CD14-positive monocyte (primary cell): ENCODE measurements at regions of chr2 and their contacts with region 1.

Region 1: GRCh38 chr2:10072656-10073480 is 7.3 kb downstream of the CYS1 start:
- DNase-seq: peak; percentile 74 to 79 (median 79)
- H3K4me3 ChIP-seq: no peak overlapping the region
- H3K4me3 Mint-ChIP-seq: peak overlapping the region in 1 of 2 donors; percentile 24
- H3K27ac ChIP-seq: no peak overlapping the region
- H3K27ac Mint-ChIP-seq: no peak overlapping the region
- H3K4me1 ChIP-seq: no peaks in the 10 kb centered on the region
- H3K4me1 Mint-ChIP-seq: peaks cover 3% of the 10 kb centered on the region
- H3K27me3 ChIP-seq: peaks cover 28 to 52% of the 10 kb centered on the region in 2 donors
- H3K27me3 Mint-ChIP-seq: peaks cover 49 to 62% (median 59%) of the 10 kb centered on the region in 3 donors
- CTCF ChIP-seq: peak; percentile 79

Region 2: DNA sequence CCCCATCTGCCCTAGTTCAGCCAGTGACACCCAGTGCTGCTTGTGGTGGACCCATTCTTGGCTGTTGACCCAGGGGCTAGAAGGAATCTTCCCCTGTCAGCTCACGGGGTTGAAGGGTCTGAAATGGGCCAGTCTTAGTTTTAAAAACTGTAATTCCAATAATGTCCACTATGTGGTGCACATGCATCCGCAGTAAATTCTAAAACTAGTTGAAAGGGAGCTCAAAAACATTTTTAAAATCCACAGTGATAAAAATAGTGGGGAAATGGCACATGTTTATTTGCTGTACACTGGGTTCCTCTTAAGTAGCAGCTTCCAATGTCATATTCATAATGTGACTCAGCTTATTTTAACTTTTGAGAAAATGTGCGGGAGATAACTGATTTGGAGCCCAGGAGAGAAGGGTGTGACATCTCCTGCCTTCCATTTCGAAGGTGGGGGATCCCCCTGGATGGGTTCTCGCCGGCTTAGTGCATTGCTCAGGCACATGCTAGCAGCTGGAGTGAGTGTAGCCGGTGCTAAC is 88.6 kb before region 1 on chr2:
- intact Hi-C with region 1: no loop called
- DNase-seq: peak; percentile 52 to 74 (median 61)
- H3K4me3 ChIP-seq: no peak overlapping the region
- H3K4me3 Mint-ChIP-seq: peak overlapping the region; percentile 45 to 70
- H3K27ac ChIP-seq: no peak overlapping the region
- H3K27ac Mint-ChIP-seq: peak overlapping the region in 3 of 7 donors; percentile 32 to 73 (median 65)
- H3K4me1 ChIP-seq: peaks cover 3 to 8% of the 10 kb centered on the region in 2 donors
- H3K4me1 Mint-ChIP-seq: peaks cover 7% of the 10 kb centered on the region
- H3K27me3 ChIP-seq: no peaks in the 10 kb centered on the region
- H3K27me3 Mint-ChIP-seq: peaks cover 10 to 17% (median 13%) of the 10 kb centered on the region in 3 donors
- CTCF ChIP-seq: peak; percentile 79

Region 3: DNA sequence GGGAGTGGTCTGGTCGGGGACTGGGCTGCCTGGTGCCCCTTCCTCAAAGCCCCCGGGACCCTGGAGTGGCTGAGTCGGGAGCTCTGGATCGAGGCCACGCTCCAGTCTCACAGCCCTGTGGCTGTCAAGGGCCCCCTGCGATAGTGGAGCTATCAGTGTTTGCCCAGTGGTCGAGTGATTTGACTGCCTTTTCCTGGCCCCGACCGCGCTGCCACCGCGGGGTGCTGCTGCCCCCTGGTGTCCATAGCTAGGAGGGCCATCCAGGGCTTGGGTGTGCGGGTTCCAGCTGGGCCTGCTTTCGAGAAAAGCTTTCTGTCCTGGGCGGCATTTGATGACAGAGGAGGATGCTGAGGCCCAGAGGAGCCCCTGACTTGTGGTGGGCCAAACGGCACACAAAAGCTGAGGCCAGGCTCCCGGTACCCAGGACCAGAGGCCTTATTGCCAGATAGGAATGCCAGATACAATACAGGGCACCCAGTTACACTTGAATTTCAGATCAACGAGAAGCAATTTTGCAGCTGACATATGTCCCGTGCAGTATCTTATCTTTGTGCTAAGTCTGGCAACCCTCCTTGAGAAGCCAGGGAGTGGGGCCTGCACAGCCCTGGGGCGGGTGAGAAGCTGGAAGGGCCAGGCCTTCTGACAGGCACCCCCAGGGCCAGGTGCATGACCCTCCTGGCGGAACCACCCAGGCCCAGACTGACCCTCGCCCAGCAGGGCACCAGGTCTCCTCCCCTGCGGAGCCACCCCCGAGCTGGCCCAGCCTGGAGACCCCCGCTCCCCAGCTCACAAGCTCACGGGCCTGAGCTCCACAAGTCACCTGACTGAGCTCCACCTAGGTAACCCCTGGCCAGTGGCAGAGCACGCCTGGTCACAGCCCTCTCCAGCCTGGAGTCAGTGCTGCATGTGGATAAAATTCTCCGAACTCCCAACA is 362.3 kb after region 1 on chr2:
- intact Hi-C with region 1: loop called (anchors 1 to 2 kb)
- DNase-seq: peak; percentile 68 to 73 (median 69)
- H3K4me3 ChIP-seq: no peak overlapping the region
- H3K4me3 Mint-ChIP-seq: no peak overlapping the region
- H3K27ac ChIP-seq: no peak overlapping the region
- H3K27ac Mint-ChIP-seq: no peak overlapping the region
- H3K4me1 ChIP-seq: peaks cover 12 to 17% of the 10 kb centered on the region in 2 donors
- H3K4me1 Mint-ChIP-seq: peaks cover 15% of the 10 kb centered on the region
- H3K27me3 ChIP-seq: peaks cover 0 to 6% of the 10 kb centered on the region in 2 donors
- H3K27me3 Mint-ChIP-seq: peaks cover 7 to 16% (median 8%) of the 10 kb centered on the region in 3 donors
- CTCF ChIP-seq: peak; percentile 96

Region 4: DNA sequence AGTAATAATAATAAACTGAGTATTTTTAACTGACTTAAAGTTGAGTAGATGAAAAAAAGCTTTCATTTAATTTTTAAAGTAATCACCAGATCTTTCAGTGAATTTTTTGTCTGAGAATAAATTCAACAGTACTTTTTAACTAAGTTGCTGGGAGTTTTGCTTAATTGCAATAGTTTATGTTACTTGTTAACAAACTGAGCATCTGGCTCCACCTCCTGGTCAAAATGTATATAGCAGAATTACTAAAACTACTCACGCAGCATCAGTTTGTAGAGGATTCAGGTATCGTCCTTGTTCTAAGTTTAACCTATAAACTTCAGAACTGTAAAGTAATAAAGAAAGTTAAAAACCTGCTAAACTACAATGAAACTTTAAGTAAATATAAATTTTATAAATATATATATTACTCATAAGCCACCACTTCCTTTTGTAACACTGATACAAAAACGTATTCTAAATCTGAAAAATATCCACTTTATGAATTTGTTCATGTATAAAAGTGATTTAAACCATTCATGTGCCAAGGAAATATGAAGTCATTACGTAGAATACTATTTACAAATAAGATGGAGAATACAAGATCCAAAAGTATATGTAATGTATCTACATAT is 595.6 kb after region 1 on chr2:
- intact Hi-C with region 1: loop called (anchors 5 kb)
- DNase-seq: peak; percentile 30 to 59 (median 44)
- H3K4me3 ChIP-seq: no peak overlapping the region
- H3K4me3 Mint-ChIP-seq: no peak overlapping the region
- H3K27ac ChIP-seq: no peak overlapping the region
- H3K27ac Mint-ChIP-seq: no peak overlapping the region
- H3K4me1 ChIP-seq: no peaks in the 10 kb centered on the region
- H3K4me1 Mint-ChIP-seq: no peaks in the 10 kb centered on the region
- H3K27me3 ChIP-seq: no peaks in the 10 kb centered on the region
- H3K27me3 Mint-ChIP-seq: peaks cover 0 to 3% (median 0%) of the 10 kb centered on the region in 3 donors
- CTCF ChIP-seq: peak; percentile 87